ENCODE measurements at regions of chr2 and their contacts with region 1.

Region 1: DNA sequence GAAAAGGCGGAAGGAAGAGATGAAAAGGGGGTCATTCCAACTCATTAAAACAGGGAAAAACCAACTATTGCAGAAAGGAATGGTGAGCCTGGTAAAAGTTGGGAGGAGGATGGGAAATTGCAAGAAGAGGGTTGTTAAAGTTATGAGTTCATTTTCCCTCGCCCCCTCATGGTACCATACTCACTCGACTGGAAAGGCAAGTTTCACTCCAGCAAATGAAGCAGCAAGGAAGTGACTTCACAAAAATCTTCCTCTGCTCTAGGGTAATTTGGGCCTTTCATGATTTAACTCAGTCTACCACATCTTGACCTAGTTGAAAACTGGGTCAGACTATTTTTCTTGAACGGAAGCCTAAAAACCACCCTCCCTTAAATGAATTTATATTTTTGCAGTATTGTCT is 22.8 kb upstream of the DAW1 start:
- DNase-seq: peak; percentile 80
- ATAC-seq: peak; percentile 95
- H3K4me3 ChIP-seq: peak overlapping the region; percentile 20; the same call in 1 of the 2 replicates
- H3K27ac ChIP-seq: peak overlapping the region; percentile 38
- H3K4me1 ChIP-seq: peaks cover 8% of the 10 kb centered on the region; the same call in 1 of the 2 replicates
- H3K27me3 ChIP-seq: no peaks in the 10 kb centered on the region
- CTCF ChIP-seq: no peak
- EP300 ChIP-seq: 0 out of 4 replicates have a peak, but pooled peaks of 1 of the 2 experiments have one; percentile 50
- POLR2A ChIP-seq: no peak
- RAD21 ChIP-seq: no peak

Region 2: GRCh38 chr2:227460070-227460485 is 388.5 kb before region 1 on chr2:
- CTCF ChIA-PET with region 1: no interaction called
- POLR2A ChIA-PET with region 1: no interaction called
- RAD21 ChIA-PET with region 1: no interaction called
- SMC1A ChIA-PET with region 1: interaction called, 3 read pairs
- in situ Hi-C with region 1: no loop called
- intact Hi-C with region 1: loop called (anchors 5 kb)
- DNase-seq: no peak
- ATAC-seq: peak; percentile 67
- H3K4me3 ChIP-seq: no peak overlapping the region
- H3K27ac ChIP-seq: peak overlapping the region; percentile 54
- H3K4me1 ChIP-seq: peaks cover 55% of the 10 kb centered on the region
- H3K27me3 ChIP-seq: no peaks in the 10 kb centered on the region
- CTCF ChIP-seq: no peak
- EP300 ChIP-seq: peak; percentile 59 to 65; a peak in 2 of 4 replicates
- POLR2A ChIP-seq: no peak
- RAD21 ChIP-seq: no peak

Region 3: GRCh38 chr2:227774011-227774624 is 74.5 kb before region 1 on chr2:
- CTCF ChIA-PET with region 1: interaction called, 12 read pairs
- POLR2A ChIA-PET with region 1: interaction called, 8 read pairs
- RAD21 ChIA-PET with region 1: interaction called, 4 read pairs
- SMC1A ChIA-PET with region 1: interaction called, 5 read pairs
- in situ Hi-C with region 1: no loop called
- intact Hi-C with region 1: no loop called
- DNase-seq: no peak
- ATAC-seq: peak; percentile 94
- H3K4me3 ChIP-seq: no peak overlapping the region
- H3K27ac ChIP-seq: no peak overlapping the region
- H3K4me1 ChIP-seq: no peaks in the 10 kb centered on the region
- H3K27me3 ChIP-seq: no peaks in the 10 kb centered on the region
- CTCF ChIP-seq: peak; percentile 22 to 46 (median 43); a peak in 5 of 6 replicates
- EP300 ChIP-seq: no peak
- POLR2A ChIP-seq: no peak
- RAD21 ChIP-seq: peak; percentile 43

Region 4: GRCh38 chr2:227816507-227817274 is 31.9 kb before region 1 on chr2:
- CTCF ChIA-PET with region 1: interaction called, 4 read pairs
- POLR2A ChIA-PET with region 1: interaction called, 4 read pairs
- RAD21 ChIA-PET with region 1: interaction called, 4 read pairs
- SMC1A ChIA-PET with region 1: interaction called, 12 read pairs
- in situ Hi-C with region 1: no loop called
- intact Hi-C with region 1: loop called (anchors 2 kb)
- DNase-seq: no peak
- ATAC-seq: peak; percentile 23; the same call in 2 of the 3 replicates
- H3K4me3 ChIP-seq: no peak overlapping the region
- H3K27ac ChIP-seq: no peak overlapping the region
- H3K4me1 ChIP-seq: no peaks in the 10 kb centered on the region
- H3K27me3 ChIP-seq: no peaks in the 10 kb centered on the region
- CTCF ChIP-seq: no peak
- EP300 ChIP-seq: no peak
- POLR2A ChIP-seq: no peak
- RAD21 ChIP-seq: no peak

Region 5: GRCh38 chr2:227921648-227922047 is 73.1 kb after region 1 on chr2:
- CTCF ChIA-PET with region 1: no interaction called
- POLR2A ChIA-PET with region 1: no interaction called
- RAD21 ChIA-PET with region 1: no interaction called
- SMC1A ChIA-PET with region 1: no interaction called
- in situ Hi-C with region 1: no loop called
- intact Hi-C with region 1: no loop called
- DNase-seq: no peak
- ATAC-seq: no peak
- H3K4me3 ChIP-seq: no peak overlapping the region
- H3K27ac ChIP-seq: no peak overlapping the region
- H3K4me1 ChIP-seq: no peaks in the 10 kb centered on the region
- H3K27me3 ChIP-seq: no peaks in the 10 kb centered on the region
- CTCF ChIP-seq: no peak
- EP300 ChIP-seq: no peak
- POLR2A ChIP-seq: no peak
- RAD21 ChIP-seq: no peak